ENCODE measurements at regions of chr6 and their contacts with region 1.

Region 1: DNA sequence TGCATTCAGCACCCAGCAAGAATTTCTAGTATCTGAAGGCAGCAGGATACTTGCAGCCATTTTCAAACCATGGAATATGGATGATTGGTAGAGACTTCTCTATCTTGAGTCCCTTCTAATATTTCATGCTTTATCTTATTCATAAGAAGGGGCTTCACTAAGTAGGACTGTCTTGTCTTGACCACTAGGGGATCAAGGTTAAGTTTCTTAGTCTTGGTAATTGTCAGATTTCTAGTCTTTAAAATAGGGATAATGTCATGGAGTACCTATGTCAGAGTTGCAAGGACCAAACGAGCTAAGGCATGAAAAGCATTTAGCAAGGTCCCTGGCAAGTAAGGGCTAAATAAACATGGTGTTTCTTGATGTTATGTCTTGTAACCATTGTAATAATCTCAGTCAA is 68.5 kb upstream of the ESR1 start:
- DNase-seq: no peak
- H3K4me3 ChIP-seq: no peak overlapping the region
- H3K27ac ChIP-seq: no peak overlapping the region
- H3K4me1 ChIP-seq: no peaks in the 10 kb centered on the region
- H3K27me3 ChIP-seq: no peaks in the 10 kb centered on the region
- CTCF ChIP-seq: no peak
- POLR2A ChIP-seq: no peak

Region 2: GRCh38 chr6:151209071-151209831 is 529.7 kb before region 1 on chr6:
- intact Hi-C with region 1: no loop called
- DNase-seq: no peak
- H3K4me3 ChIP-seq: no peak overlapping the region
- H3K27ac ChIP-seq: no peak overlapping the region
- H3K4me1 ChIP-seq: peaks cover 0 to 12% (median 0%) of the 10 kb centered on the region in 3 donors
- H3K27me3 ChIP-seq: no peaks in the 10 kb centered on the region
- CTCF ChIP-seq: no peak
- POLR2A ChIP-seq: no peak

Region 3: GRCh38 chr6:151675746-151676416 is 63.1 kb before region 1 on chr6:
- intact Hi-C with region 1: loop called (anchors 2 kb)
- DNase-seq: no peak
- H3K4me3 ChIP-seq: no peak overlapping the region
- H3K27ac ChIP-seq: no peak overlapping the region
- H3K4me1 ChIP-seq: peaks cover 0 to 35% (median 0%) of the 10 kb centered on the region in 3 donors
- H3K27me3 ChIP-seq: no peaks in the 10 kb centered on the region
- CTCF ChIP-seq: peak; percentile 37 to 90 (median 74)
- POLR2A ChIP-seq: no peak